ENCODE measurements at regions of chr11 and their contacts with region 1.

Region 1: GRCh38 chr11:114354076-114354475 is 46.2 kb downstream of the C11orf71 start:
- DNase-seq: peak; percentile 94
- ATAC-seq: peak; percentile 71
- H3K4me3 ChIP-seq: no peak overlapping the region
- H3K27ac ChIP-seq: no peak overlapping the region
- H3K4me1 ChIP-seq: peaks cover 4% of the 10 kb centered on the region
- H3K27me3 ChIP-seq: no peaks in the 10 kb centered on the region
- CTCF ChIP-seq: no peak
- POLR2A ChIP-seq: no peak
- RAD21 ChIP-seq: no peak

Region 2: GRCh38 chr11:114439229-114440120 is 85.4 kb after region 1 on chr11 and contains the start of gene REXO2:
- CTCF ChIA-PET with region 1: no interaction called
- POLR2A ChIA-PET with region 1: no interaction called
- dilution Hi-C with region 1: no loop called
- in situ Hi-C with region 1: loop called (anchors 10 kb)
- intact Hi-C with region 1: loop called (anchors 2 kb)
- DNase-seq: peak; percentile 93
- ATAC-seq: peak; percentile 93
- H3K4me3 ChIP-seq: peak within 1 kb of the TSS; percentile 89
- H3K27ac ChIP-seq: peak within 1 kb of the TSS; percentile 90
- H3K4me1 ChIP-seq: peaks cover 5% of the 10 kb centered on the region
- H3K27me3 ChIP-seq: no peaks in the 10 kb centered on the region
- CTCF ChIP-seq: peak; percentile 51
- POLR2A ChIP-seq: peak; percentile 58
- RAD21 ChIP-seq: peak; percentile 37; the same call in 1 of the 2 replicates
- total RNA-seq, gene REXO2: 179 and 276 TPM in 2 replicates